MCF 10A (cell line): ENCODE measurements at regions of chr17 and their contacts with region 1.

Region 1: GRCh38 chr17:11997147-11997846 is at the start of gene ZNF18:
- DNase-seq: peak; percentile 91
- H3K4me3 Mint-ChIP-seq: peak within 1 kb of the TSS; percentile 82
- H3K27ac Mint-ChIP-seq: peak within 1 kb of the TSS; percentile 92
- H3K4me1 Mint-ChIP-seq: peaks cover 8% of the 10 kb centered on the region
- H3K27me3 Mint-ChIP-seq: no peaks in the 10 kb centered on the region
- CTCF ChIP-seq: no peak
- total RNA-seq, gene ZNF18: 4.6 and 7.3 TPM in 2 replicates

Region 2: DNA sequence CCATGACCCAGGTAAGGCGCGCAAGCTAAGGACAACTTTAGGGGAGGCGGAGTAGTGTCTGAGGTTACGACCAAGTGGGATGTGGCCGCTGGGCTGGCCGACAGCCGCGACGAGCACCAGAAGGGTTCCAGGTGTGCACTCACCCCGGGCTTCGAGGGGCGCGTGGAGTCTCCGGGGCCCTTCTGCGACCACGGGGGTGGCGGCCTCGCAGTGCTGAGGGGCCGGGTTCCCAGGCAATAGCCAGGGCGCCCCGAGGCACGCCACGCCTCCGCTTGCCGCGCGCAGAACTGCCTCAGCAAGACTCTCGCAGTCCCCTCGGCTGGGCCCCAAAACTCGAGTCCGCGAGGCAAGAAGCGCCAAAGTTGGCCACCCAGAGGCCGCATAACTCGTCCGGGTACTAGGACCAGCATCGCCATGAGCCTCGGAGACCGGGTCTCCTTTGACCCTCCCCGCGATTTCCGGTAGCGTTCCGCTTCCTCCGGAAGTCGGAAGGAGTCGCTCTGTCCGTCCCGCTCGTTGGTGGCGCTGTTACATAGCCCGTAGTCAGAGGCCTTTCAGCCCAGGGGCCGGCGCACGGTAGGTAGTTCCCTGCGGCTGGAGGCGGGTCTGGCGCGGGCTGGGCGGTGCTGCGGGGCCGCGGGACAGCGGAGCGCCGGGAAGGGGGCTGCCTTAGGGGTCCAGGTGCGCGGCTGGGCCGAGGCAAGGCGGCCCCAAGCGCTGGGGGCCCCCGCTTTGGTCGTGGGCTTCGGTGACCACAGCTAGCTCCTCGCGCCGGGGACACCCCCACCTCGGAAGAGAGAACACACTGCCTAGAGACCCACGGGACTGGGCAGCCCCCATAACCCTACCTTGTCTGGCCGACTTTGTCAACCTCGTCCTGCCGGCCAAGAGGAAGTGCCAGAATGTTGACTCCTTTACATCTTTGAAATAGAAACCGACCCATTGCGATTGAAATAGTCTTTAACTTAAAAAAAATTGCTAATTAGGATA is 1299.9 kb before region 1 on chr17 and contains the starts of genes ADPRM and SCO1:
- CTCF ChIA-PET with region 1: no interaction called
- POLR2A ChIA-PET with region 1: interaction called, 17 read pairs
- intact Hi-C with region 1: no loop called
- DNase-seq: peak; percentile 93
- H3K4me3 Mint-ChIP-seq: peak within 1 kb of the TSS; percentile 88
- H3K27ac Mint-ChIP-seq: peak within 1 kb of the TSS; percentile 91
- H3K4me1 Mint-ChIP-seq: peaks cover 12% of the 10 kb centered on the region
- H3K27me3 Mint-ChIP-seq: no peaks in the 10 kb centered on the region
- CTCF ChIP-seq: peak; percentile 22
- total RNA-seq, gene ADPRM: 8.2 and 9.8 TPM in 2 replicates
- total RNA-seq, gene SCO1: 55.8 and 58.8 TPM in 2 replicates

Region 3: GRCh38 chr17:11823862-11824261 is 173.4 kb before region 1 on chr17:
- CTCF ChIA-PET with region 1: no interaction called
- POLR2A ChIA-PET with region 1: no interaction called
- intact Hi-C with region 1: no loop called
- DNase-seq: no peak
- H3K4me3 Mint-ChIP-seq: no peak overlapping the region
- H3K27ac Mint-ChIP-seq: no peak overlapping the region
- H3K4me1 Mint-ChIP-seq: peaks cover 10% of the 10 kb centered on the region
- H3K27me3 Mint-ChIP-seq: no peaks in the 10 kb centered on the region
- CTCF ChIP-seq: no peak

Region 4: DNA sequence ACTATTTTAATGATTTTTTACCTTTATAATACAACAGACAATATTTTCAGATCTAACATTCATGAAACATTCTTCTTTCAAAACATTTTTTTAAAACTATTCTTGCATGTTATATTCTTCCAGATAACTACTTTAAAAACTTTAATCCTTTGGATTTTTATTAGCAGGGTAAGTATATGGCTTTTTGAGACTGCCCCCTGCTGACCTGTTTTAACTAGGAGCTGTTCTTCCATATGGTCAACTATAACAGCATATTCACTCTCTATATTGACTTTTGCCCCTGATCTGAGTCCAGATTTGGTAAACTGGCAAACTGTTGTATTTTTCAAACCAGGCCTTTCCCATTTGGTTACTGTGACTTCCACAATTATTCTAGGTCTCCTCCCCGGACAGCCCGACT is 16.5 kb before region 1 on chr17:
- CTCF ChIA-PET with region 1: interaction called, 6 read pairs
- POLR2A ChIA-PET with region 1: interaction called, 19 read pairs
- intact Hi-C with region 1: no loop called
- DNase-seq: peak; percentile 38
- H3K4me3 Mint-ChIP-seq: no peak overlapping the region
- H3K27ac Mint-ChIP-seq: no peak overlapping the region
- H3K4me1 Mint-ChIP-seq: peaks cover 17% of the 10 kb centered on the region
- H3K27me3 Mint-ChIP-seq: no peaks in the 10 kb centered on the region
- CTCF ChIP-seq: peak; percentile 39

Region 5: GRCh38 chr17:12020642-12021622 is 23.6 kb after region 1 on chr17 and contains the start of gene MAP2K4:
- CTCF ChIA-PET with region 1: interaction called, 7 read pairs
- POLR2A ChIA-PET with region 1: interaction called, 184 read pairs
- intact Hi-C with region 1: no loop called
- DNase-seq: peak; percentile 86
- H3K4me3 Mint-ChIP-seq: peak within 1 kb of the TSS; percentile 73
- H3K27ac Mint-ChIP-seq: peak within 1 kb of the TSS; percentile 66
- H3K4me1 Mint-ChIP-seq: peaks cover 29% of the 10 kb centered on the region
- H3K27me3 Mint-ChIP-seq: no peaks in the 10 kb centered on the region
- CTCF ChIP-seq: no peak
- total RNA-seq, gene MAP2K4: 29.2 and 42.3 TPM in 2 replicates

Region 6: GRCh38 chr17:12047681-12048376 is 50.5 kb after region 1 on chr17:
- CTCF ChIA-PET with region 1: interaction called, 6 read pairs
- POLR2A ChIA-PET with region 1: interaction called, 12 read pairs
- intact Hi-C with region 1: no loop called
- DNase-seq: peak; percentile 68
- H3K4me3 Mint-ChIP-seq: no peak overlapping the region
- H3K27ac Mint-ChIP-seq: no peak overlapping the region
- H3K4me1 Mint-ChIP-seq: peaks cover 39% of the 10 kb centered on the region
- H3K27me3 Mint-ChIP-seq: no peaks in the 10 kb centered on the region
- CTCF ChIP-seq: no peak

Region 7: GRCh38 chr17:12445331-12445730 is 448.0 kb after region 1 on chr17:
- CTCF ChIA-PET with region 1: no interaction called
- POLR2A ChIA-PET with region 1: no interaction called
- intact Hi-C with region 1: no loop called
- DNase-seq: no peak
- H3K4me3 Mint-ChIP-seq: no peak overlapping the region
- H3K27ac Mint-ChIP-seq: no peak overlapping the region
- H3K4me1 Mint-ChIP-seq: no peaks in the 10 kb centered on the region
- H3K27me3 Mint-ChIP-seq: no peaks in the 10 kb centered on the region
- CTCF ChIP-seq: no peak